ENCODE measurements at regions of chr4 and their contacts with region 1.

Region 1: DNA sequence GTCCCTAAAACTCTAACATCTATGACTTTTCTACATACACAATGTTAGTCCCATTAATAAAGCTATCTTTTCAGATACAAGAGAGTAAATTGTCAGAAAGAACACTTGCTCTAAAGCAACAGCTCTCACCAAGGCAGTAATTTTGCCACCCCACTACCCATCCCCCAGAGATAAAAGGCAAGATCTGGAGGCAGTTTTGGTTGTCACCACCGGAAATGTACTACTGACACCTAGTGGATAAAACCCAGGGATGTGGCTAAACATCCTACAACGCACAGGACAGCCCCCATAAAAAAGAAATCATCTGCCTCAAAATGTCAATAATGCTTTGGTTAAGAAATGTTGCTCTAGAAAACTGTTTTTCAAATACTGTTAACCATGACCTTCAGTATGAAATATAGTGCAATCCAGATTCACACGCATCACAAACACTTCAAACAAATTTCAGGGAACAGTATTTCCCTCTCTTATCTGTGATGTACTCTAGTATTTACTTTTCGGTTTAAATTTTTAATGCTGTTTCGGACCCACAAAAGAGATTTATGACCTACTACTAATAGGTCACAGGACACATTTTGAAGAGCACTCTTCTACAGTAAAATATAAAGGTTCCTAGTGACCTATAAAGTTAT is 5.1 kb downstream of the FBXL5 start:
- DNase-seq: no peak
- ATAC-seq: peak; percentile 71 to 83 (median 78)
- H3K4me3 ChIP-seq: no peak overlapping the region
- H3K27ac ChIP-seq: no peak overlapping the region
- H3K4me1 ChIP-seq: peaks cover 0 to 56% (median 19%) of the 10 kb centered on the region in 4 donors
- H3K27me3 ChIP-seq: no peaks in the 10 kb centered on the region
- CTCF ChIP-seq: peak; percentile 68 to 77 (median 74)
- POLR2A ChIP-seq: no peak

Region 2: DNA sequence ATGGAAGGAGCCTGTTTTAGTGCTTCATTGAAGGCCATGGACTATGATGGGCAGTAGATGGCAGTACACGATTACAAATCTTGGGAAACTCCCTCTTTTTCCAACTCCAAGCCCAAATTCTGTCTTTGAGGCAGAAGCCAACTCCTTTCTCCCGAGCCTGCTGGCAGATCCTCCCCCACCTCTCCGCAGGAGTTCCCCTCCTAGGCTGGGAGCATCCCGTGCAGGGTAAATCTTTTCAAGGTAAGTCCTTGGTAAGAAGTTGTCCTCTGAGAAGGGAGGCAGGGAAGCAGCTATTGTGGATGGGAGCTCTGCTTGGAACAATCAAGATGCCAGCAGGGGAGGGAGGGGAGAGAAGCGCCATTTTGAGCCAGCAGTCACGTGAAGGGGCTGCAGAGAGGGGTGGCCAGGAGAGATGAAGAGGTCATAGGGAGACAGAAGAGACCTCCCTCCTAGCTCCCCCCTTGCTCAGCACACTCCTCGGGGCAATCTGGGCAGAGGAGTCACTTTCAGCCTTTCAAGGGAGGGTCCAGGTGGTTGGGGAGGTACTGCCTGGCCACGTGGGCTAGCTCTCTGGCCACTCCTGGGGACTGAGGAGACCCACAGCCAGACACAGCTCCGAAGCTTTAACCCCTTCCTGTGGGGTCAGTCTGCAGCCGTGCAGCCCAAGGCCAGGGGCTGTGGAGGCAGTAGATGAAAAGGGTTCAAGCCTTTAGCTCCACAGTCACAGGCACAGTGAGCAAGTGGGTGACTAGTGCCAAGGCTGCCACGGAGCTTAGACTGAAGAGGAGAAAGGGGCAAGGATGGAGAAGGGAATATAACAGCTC is 170.7 kb before region 1 on chr4:
- intact Hi-C with region 1: loop called in 1 of 2 experiments (anchors 5 kb)
- DNase-seq: peak; percentile 34 to 67 (median 57)
- ATAC-seq: peak; percentile 95 to 97 (median 95)
- H3K4me3 ChIP-seq: peak overlapping the region; percentile 60 to 63 (median 63)
- H3K27ac ChIP-seq: peak overlapping the region; percentile 16 to 67 (median 56)
- H3K4me1 ChIP-seq: peaks cover 0 to 4% (median 0%) of the 10 kb centered on the region in 4 donors
- H3K27me3 ChIP-seq: no peaks in the 10 kb centered on the region
- CTCF ChIP-seq: peak; percentile 53 to 77 (median 70)
- POLR2A ChIP-seq: no peak

Measured in right lobe of liver (tissue), 6 donors.